ENCODE measurements at regions of chr2 and their contacts with region 1.

Region 1: DNA sequence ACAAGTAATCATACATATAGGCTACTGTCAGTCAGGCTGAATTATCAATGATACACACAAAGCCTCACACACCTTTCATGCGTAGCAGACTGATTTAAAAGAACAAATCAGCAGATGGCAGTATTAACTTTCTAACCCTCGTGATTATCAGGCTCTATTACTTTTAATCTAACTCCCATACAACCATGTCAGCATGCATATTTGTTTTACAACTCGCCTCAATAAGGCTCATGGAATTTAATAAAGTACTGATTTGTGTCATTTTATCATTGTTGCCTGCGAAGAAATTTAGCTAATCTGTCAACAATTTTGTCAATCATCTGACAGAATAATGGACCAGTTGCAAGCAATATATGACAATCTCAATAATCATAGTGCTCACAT is 82.8 kb downstream of the SLC25A12 start:
- DNase-seq: no peak
- ATAC-seq: no peak
- H3K4me3 ChIP-seq: no peak overlapping the region
- H3K27ac ChIP-seq: no peak overlapping the region
- H3K4me1 ChIP-seq: no peaks in the 10 kb centered on the region
- H3K27me3 ChIP-seq: no peaks in the 10 kb centered on the region
- CTCF ChIP-seq: peak in 6 of 7 experiments; percentile 20 to 65 (median 46)
- POLR2A ChIP-seq: no peak

Region 2: GRCh38 chr2:171598713-171599319 is 212.4 kb before region 1 on chr2:
- intact Hi-C with region 1: no loop called
- DNase-seq: peak; percentile 37 to 59 (median 50)
- ATAC-seq: peak; percentile 71
- H3K4me3 ChIP-seq: no peak overlapping the region
- H3K27ac ChIP-seq: no peak overlapping the region
- H3K4me1 ChIP-seq: no peaks in the 10 kb centered on the region
- H3K27me3 ChIP-seq: no peaks in the 10 kb centered on the region
- CTCF ChIP-seq: peak; percentile 32 to 75 (median 64)
- POLR2A ChIP-seq: no peak

Region 3: DNA sequence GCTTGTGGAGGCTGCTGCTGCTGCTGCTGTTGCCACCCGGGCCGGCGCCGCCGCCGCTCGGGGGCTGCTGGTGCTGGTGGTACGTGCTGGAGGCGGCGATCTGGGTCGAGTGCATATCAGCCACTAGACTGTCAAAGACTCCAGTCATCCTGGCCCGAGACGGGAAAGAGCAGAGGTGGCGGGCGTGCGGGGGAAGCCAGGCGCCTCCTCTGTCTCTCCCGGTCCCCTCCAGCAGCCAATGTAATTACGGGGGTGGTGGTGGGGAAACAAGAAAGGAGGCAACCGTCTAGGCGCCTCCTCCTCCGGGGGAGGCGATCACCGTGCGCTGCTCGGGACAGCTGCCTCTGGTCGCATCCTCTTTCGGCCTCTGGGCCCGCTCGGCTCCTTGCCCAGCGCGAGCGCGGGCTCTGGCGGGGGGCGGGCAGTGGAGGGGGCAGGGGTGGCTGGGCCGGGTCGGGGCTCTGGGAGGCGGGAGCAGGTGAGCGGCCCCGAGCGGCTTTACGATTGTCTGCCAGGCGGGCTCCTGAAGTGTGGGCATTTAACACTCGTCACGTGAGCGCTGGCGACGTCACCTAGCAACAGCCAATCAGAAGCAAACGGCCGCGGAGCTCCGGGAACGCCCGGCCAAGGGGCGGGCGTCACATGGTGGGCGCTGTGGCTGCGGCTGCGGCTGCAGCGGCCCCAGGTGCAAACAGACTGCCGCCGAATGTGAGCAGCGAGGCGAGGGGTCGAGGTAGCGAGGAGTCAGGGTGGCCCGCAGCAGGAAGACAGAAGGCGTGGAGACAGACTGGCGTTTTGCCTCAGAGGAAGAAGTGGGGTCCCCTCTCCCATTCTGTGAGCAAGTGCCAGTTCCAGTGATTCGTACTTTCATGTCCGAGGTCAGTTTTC is 291.4 kb after region 1 on chr2 and contains the start of gene DLX2:
- intact Hi-C with region 1: loop called (anchors 10 kb)
- DNase-seq: peak; percentile 73 to 85 (median 80)
- ATAC-seq: peak; percentile 66
- H3K4me3 ChIP-seq: peak within 1 kb of the TSS in 1 of 2 donors; percentile 17
- H3K27ac ChIP-seq: no peak within 1 kb of the TSS
- H3K4me1 ChIP-seq: peaks cover 59% of the 10 kb centered on the region
- H3K27me3 ChIP-seq: peaks cover 13 to 89% of the 10 kb centered on the region in 2 donors
- CTCF ChIP-seq: no peak
- POLR2A ChIP-seq: no peak
- total RNA-seq, gene DLX2: not detected